A673 (cell line): ENCODE measurements at regions of chr16 and their contacts with region 1.

Region 1: DNA sequence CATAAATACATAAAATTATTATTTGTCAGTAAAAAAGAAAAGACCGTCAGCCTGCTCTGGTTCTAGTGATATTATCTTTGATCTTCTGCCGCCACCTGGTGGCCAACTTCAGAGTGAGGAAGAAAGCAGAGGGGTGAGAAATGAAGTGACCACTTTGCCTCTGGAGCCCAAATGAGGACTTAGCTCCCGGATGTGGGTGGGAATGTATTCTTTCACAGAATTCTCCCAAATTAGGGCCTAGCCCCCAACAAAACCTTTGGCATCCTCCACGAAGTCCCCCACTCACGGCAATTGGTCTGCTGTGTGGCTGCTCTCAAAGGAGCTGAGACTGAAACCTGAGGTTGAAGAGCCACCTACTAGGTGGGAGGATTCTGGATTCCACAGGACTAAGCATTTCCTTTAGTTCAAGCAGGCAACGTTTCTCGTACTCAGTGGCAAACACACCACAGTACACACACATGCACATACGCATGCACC is 4.9 kb upstream of the ZNF267 start:
- DNase-seq: peak; percentile 78
- H3K4me3 ChIP-seq: no peak overlapping the region
- H3K27ac ChIP-seq: no peak overlapping the region
- H3K4me1 ChIP-seq: peaks cover 5% of the 10 kb centered on the region
- H3K27me3 ChIP-seq: no peaks in the 10 kb centered on the region
- CTCF ChIP-seq: peak; percentile 78

Region 2: GRCh38 chr16:30984669-30985400 is 883.9 kb before region 1 on chr16 and contains the start of gene HSD3B7:
- CTCF ChIA-PET with region 1: no interaction called
- POLR2A ChIA-PET with region 1: no interaction called
- intact Hi-C with region 1: loop called (anchors 10 kb)
- DNase-seq: peak; percentile 85
- H3K4me3 ChIP-seq: no peak within 1 kb of the TSS
- H3K27ac ChIP-seq: no peak within 1 kb of the TSS
- H3K4me1 ChIP-seq: no peaks in the 10 kb centered on the region
- H3K27me3 ChIP-seq: no peaks in the 10 kb centered on the region
- CTCF ChIP-seq: peak; percentile 97
- total RNA-seq, gene HSD3B7: 0.85 and 0.95 TPM in 2 replicates

Region 3: GRCh38 chr16:31451681-31452351 is 416.9 kb before region 1 on chr16:
- CTCF ChIA-PET with region 1: no interaction called
- POLR2A ChIA-PET with region 1: no interaction called
- intact Hi-C with region 1: loop called (anchors 5 kb)
- DNase-seq: peak; percentile 80
- H3K4me3 ChIP-seq: no peak overlapping the region
- H3K27ac ChIP-seq: no peak overlapping the region
- H3K4me1 ChIP-seq: peaks cover 47% of the 10 kb centered on the region
- H3K27me3 ChIP-seq: no peaks in the 10 kb centered on the region
- CTCF ChIP-seq: peak; percentile 66

Region 4: DNA sequence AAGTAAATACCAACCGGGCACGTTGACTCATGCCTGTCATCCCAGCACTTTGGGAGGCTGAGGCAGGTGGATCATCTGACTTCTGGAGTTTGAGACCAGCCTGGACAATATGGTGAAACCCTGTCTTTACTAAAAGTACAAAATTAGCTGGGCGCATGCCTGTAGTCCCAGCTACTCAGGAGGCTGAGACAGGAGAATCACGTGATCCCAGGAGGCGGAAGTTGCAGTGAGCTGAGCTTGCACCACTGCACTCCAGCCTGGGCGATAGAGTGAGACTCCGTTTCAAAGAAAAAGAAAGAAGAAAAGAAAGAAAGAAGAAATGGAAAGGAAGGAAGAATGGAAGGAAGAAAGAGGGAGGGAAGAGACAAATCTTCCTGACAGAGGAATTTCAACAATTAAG is 232.3 kb before region 1 on chr16:
- CTCF ChIA-PET with region 1: interaction called, 10 read pairs
- POLR2A ChIA-PET with region 1: no interaction called
- intact Hi-C with region 1: no loop called
- DNase-seq: no peak
- H3K4me3 ChIP-seq: no peak overlapping the region
- H3K27ac ChIP-seq: no peak overlapping the region
- H3K4me1 ChIP-seq: no peaks in the 10 kb centered on the region
- H3K27me3 ChIP-seq: no peaks in the 10 kb centered on the region
- CTCF ChIP-seq: no peak